GM12878 (cell line): ENCODE measurements at regions of chr6 and their contacts with region 1.

Region 1: GRCh38 chr6:14728396-14729024 is 517.4 kb upstream of the JARID2 start:
- DNase-seq: no peak
- ATAC-seq: no peak
- H3K4me3 ChIP-seq: no peak overlapping the region
- H3K27ac ChIP-seq: peak overlapping the region; percentile 67
- H3K4me1 ChIP-seq: peaks cover 24% of the 10 kb centered on the region
- H3K27me3 ChIP-seq: no peaks in the 10 kb centered on the region
- CTCF ChIP-seq: no peak
- EP300 ChIP-seq: no peak
- POLR2A ChIP-seq: no peak
- RAD21 ChIP-seq: no peak

Region 2: DNA sequence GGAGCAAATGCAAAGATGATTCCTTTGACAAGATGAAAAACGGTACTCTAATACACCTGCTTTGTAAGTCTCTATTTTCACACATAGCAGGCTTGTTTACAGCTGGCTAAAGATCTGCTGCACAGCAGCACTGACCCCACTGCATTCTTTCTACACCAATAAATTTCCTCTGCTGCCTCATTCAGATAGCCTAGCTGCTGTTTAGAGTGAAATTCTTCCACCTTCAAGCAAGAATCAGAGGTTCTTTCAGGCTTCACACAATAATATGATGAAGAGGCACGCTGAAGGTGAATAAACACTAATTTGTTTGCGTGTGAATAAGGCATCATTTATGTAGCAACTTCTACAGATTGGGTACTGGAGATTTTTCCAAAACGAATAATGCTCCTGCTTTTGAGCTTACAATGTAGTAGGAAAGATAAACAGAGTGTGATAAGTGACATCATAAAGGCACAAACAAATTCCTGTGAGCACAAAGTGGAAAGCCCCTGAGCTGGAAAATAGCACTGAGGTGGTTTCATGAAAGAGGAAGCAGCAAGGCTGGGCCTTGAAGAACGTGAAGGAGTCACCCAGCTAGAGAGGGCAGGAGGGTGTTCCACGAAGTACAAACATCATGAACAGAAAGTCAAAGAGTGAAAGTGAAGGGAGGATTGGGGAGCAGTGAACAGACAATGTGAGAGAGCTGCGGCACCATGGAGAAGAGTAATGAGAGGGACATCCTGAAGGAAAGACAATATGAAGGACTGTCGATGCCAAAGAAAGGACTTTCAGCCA is 67.5 kb before region 1 on chr6:
- CTCF ChIA-PET with region 1: interaction called, 3 read pairs
- POLR2A ChIA-PET with region 1: no interaction called
- RAD21 ChIA-PET with region 1: interaction called, 5 read pairs
- SMC1A ChIA-PET with region 1: interaction called, 12 read pairs
- in situ Hi-C with region 1: no loop called
- intact Hi-C with region 1: no loop called
- DNase-seq: peak; percentile 47
- ATAC-seq: peak; percentile 79
- H3K4me3 ChIP-seq: no peak overlapping the region; the same call in 1 of the 2 replicates
- H3K27ac ChIP-seq: no peak overlapping the region
- H3K4me1 ChIP-seq: peaks cover 33% of the 10 kb centered on the region
- H3K27me3 ChIP-seq: peaks cover 0 to 3% of the 10 kb centered on the region in 2 experiments; a peak in 2 of 4 replicates
- CTCF ChIP-seq: no peak
- EP300 ChIP-seq: 0 out of 4 replicates have a peak, but pooled peaks of 1 of the 2 experiments have one; percentile 11
- POLR2A ChIP-seq: no peak
- RAD21 ChIP-seq: no peak

Region 3: GRCh38 chr6:14676064-14676463 is 52.4 kb before region 1 on chr6:
- CTCF ChIA-PET with region 1: no interaction called
- POLR2A ChIA-PET with region 1: no interaction called
- RAD21 ChIA-PET with region 1: no interaction called
- SMC1A ChIA-PET with region 1: no interaction called
- in situ Hi-C with region 1: no loop called
- intact Hi-C with region 1: no loop called
- DNase-seq: no peak
- ATAC-seq: no peak
- H3K4me3 ChIP-seq: no peak overlapping the region
- H3K27ac ChIP-seq: no peak overlapping the region
- H3K4me1 ChIP-seq: no peaks in the 10 kb centered on the region
- H3K27me3 ChIP-seq: no peaks in the 10 kb centered on the region
- CTCF ChIP-seq: no peak
- EP300 ChIP-seq: no peak
- POLR2A ChIP-seq: no peak
- RAD21 ChIP-seq: no peak

Region 4: DNA sequence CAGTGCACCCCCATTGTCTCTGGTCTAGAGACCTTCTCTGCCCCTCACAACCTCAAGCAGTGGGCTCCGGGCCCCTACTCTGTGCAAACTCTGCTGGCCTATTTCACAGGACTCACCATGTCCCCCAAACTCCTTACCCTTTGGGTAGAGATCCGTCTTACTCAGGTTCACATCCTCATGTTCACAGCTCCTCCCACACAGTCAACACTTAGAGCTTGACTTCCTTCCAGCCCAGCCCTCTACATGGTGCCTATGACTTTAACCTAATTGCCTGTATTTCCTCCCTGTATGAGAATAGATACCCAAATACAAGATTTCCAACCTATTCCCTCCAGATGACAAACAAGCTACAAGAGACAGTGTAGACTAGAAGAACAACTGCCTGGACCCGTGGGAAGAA is 11.2 kb before region 1 on chr6:
- CTCF ChIA-PET with region 1: interaction called, 19 read pairs
- POLR2A ChIA-PET with region 1: interaction called, 3 read pairs
- RAD21 ChIA-PET with region 1: interaction called, 21 read pairs
- SMC1A ChIA-PET with region 1: interaction called, 39 read pairs
- in situ Hi-C with region 1: no loop called
- intact Hi-C with region 1: no loop called
- DNase-seq: no peak
- ATAC-seq: peak; percentile 46; the same call in 2 of the 3 replicates
- H3K4me3 ChIP-seq: no peak overlapping the region
- H3K27ac ChIP-seq: no peak overlapping the region
- H3K4me1 ChIP-seq: no peaks in the 10 kb centered on the region
- H3K27me3 ChIP-seq: no peaks in the 10 kb centered on the region
- CTCF ChIP-seq: no peak
- EP300 ChIP-seq: no peak
- POLR2A ChIP-seq: no peak
- RAD21 ChIP-seq: no peak

Region 5: DNA sequence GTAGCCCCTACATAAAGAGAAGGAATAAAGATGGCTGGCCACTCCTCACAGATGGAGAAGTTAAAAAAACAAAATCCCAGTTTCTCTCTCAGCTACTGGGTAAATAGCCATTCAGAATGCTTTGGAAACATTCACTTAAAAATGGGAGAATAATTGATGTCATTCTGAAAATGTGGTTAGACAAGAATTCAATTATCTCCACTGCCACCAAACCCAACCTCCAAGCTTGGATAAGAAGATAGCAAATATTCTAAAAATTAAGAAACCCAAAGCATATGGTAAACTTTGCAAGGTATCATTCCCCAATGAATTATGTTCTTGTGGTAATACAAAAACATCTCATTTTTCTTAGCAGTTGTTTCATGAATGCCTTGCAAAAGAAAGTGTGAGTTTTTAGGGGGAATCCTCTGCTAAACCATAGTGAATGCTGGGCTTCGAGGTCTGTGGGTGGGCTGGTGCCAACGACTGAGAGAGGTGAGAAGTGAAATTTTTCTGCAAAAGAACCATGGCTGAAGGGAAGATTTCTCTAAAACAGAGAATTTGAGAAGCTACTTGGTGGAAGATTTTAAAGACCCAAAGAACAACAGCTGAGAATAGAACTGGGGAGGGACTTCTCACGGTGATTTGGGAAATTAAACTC is 19.5 kb after region 1 on chr6:
- CTCF ChIA-PET with region 1: interaction called, 6 read pairs
- POLR2A ChIA-PET with region 1: no interaction called
- RAD21 ChIA-PET with region 1: interaction called, 14 read pairs
- SMC1A ChIA-PET with region 1: interaction called, 7 read pairs
- in situ Hi-C with region 1: no loop called
- intact Hi-C with region 1: no loop called
- DNase-seq: no peak
- ATAC-seq: peak; percentile 61
- H3K4me3 ChIP-seq: no peak overlapping the region
- H3K27ac ChIP-seq: no peak overlapping the region
- H3K4me1 ChIP-seq: peaks cover 10% of the 10 kb centered on the region; the same call in 1 of the 2 replicates
- H3K27me3 ChIP-seq: no peaks in the 10 kb centered on the region
- CTCF ChIP-seq: no peak
- EP300 ChIP-seq: peak; percentile 23 to 30; a peak in 1 of 4 replicates
- POLR2A ChIP-seq: no peak
- RAD21 ChIP-seq: no peak